IMR-90 (cell line): ENCODE measurements at regions of chr11 and their contacts with region 1.

Region 1: DNA sequence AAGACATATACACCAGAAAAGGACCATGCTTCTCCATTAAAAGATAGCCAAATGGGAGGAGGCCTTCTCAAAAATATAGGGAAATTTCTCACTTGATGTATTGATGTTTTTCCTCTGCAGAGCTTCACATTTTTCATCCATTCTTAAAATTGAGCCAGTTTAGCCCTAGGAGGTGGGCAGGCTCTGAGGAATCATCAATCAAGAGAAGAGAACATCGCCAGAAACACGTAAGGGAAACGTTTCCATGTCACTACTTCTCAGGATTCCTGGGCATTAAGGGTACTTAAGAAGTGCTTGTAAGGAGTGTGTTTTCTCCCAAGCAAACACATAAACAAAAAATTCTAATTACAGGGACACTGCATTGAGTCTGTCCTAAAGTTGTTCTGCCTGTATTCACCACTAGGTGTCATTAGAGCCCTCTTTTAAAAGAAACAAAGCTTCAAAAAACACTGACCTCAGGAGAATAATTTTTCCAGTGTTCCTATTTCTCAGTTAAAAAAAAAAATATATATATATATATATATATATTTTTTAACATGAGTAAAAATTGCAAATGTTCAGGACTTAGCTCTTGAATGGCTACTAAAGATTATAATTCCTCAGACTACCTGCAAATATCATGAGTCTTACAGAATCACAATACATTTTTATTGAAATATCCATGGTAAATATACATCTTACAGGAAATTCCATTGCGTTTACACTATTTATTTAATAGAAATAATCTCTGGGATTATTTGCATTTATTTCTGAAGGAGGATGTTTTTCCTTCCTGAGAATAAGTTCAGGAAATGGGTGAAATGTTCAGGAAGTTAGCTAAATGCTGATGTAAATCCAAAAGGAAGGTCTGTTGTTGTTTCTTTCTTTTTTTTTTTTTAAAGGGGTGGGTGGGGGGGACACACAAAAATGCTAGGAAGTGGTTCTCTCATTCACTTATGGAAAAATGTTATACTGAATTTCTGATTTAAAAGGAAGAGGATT is 16.0 kb downstream of the FZD4 start:
- DNase-seq: peak; percentile 68
- ATAC-seq: peak; percentile 43
- H3K4me3 ChIP-seq: no peak overlapping the region
- H3K27ac ChIP-seq: no peak overlapping the region
- H3K4me1 ChIP-seq: peaks cover 23% of the 10 kb centered on the region
- H3K27me3 ChIP-seq: no peaks in the 10 kb centered on the region
- CTCF ChIP-seq: peak; percentile 74
- POLR2A ChIP-seq: no peak
- RAD21 ChIP-seq: peak; percentile 73

Region 2: GRCh38 chr11:86949995-86950660 is 10.9 kb after region 1 on chr11:
- CTCF ChIA-PET with region 1: interaction called, 4 read pairs
- POLR2A ChIA-PET with region 1: interaction called, 14 read pairs
- dilution Hi-C with region 1: no loop called
- in situ Hi-C with region 1: no loop called
- intact Hi-C with region 1: no loop called
- DNase-seq: peak; percentile 77
- ATAC-seq: peak; percentile 6; the same call in 1 of the 2 replicates
- H3K4me3 ChIP-seq: no peak overlapping the region
- H3K27ac ChIP-seq: no peak overlapping the region
- H3K4me1 ChIP-seq: peaks cover 21% of the 10 kb centered on the region
- H3K27me3 ChIP-seq: no peaks in the 10 kb centered on the region
- CTCF ChIP-seq: no peak
- POLR2A ChIP-seq: no peak
- RAD21 ChIP-seq: no peak

Region 3: DNA sequence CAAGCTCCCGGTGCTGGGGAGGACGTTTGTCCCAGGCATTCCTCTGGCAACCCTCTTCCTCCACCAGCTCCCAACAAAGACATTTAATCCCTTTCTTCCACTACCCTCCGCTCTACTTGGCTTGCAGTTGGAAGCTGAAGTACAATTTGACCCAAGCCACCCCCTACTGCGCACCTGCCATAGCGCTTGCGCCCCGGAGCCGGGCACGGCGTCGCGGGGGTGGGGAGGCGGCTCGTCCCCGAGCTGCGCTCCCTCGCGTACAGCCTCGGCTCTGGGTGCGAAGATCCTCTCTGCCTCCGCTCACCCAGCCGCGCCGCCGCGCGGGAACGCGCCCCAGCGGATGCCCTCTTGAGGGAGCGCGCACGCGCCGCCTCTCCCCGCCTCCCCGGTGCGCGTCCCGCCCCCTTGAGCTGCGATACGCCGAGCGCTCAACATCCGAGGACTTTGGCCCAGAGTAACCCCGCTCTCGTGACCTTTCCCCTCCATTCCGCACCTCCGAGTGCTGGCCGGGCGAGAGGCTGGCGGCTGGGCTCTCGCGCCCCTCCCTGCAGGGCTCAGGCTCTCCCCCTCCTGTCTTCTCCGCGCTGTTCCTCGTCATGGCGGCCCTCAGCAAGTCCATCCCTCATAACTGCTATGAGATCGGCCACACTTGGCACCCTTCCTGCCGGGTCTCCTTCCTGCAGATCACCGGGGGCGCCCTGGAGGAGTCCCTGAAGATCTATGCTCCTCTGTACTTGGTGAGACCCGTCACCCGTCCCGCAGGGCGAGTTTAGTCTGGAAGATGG is 98.5 kb after region 1 on chr11 and contains the start of gene TMEM135:
- CTCF ChIA-PET with region 1: interaction called, 3 read pairs
- POLR2A ChIA-PET with region 1: no interaction called
- dilution Hi-C with region 1: no loop called
- in situ Hi-C with region 1: no loop called
- intact Hi-C with region 1: loop called (anchors 5 kb)
- DNase-seq: peak; percentile 83
- ATAC-seq: peak; percentile 98
- H3K4me3 ChIP-seq: peak within 1 kb of the TSS; percentile 81
- H3K27ac ChIP-seq: peak within 1 kb of the TSS; percentile 71
- H3K4me1 ChIP-seq: peaks cover 2% of the 10 kb centered on the region; the same call in 1 of the 2 replicates
- H3K27me3 ChIP-seq: no peaks in the 10 kb centered on the region
- CTCF ChIP-seq: no peak
- POLR2A ChIP-seq: no peak
- RAD21 ChIP-seq: no peak
- total RNA-seq, gene TMEM135: 5.9 and 6.9 TPM in 2 replicates

Region 4: DNA sequence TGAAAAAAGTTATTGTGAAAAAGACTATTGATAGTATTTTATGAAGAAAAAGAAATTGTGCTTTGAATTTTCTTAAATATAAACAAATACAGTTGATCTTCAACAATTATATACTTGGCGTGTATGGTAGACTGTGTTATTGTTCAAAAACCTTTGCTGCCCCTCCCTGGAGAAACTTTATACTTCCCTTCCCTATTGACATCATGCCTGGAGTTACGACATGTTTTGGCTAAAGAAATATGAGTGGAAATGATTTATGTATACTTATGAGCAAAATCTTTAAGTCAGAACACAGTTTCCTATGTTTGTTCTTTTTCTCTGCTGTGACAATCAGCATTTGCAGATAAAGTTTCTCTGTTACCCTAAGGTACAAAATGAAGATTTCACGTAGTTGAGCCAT is 342.3 kb after region 1 on chr11:
- CTCF ChIA-PET with region 1: interaction called, 4 read pairs
- POLR2A ChIA-PET with region 1: no interaction called
- dilution Hi-C with region 1: no loop called
- in situ Hi-C with region 1: loop called (anchors 5 kb)
- intact Hi-C with region 1: loop called (anchors 1 kb)
- DNase-seq: peak; percentile 77
- ATAC-seq: peak; percentile 83
- H3K4me3 ChIP-seq: no peak overlapping the region
- H3K27ac ChIP-seq: no peak overlapping the region
- H3K4me1 ChIP-seq: no peaks in the 10 kb centered on the region
- H3K27me3 ChIP-seq: no peaks in the 10 kb centered on the region
- CTCF ChIP-seq: peak; percentile 57
- POLR2A ChIP-seq: no peak
- RAD21 ChIP-seq: peak; percentile 62

Region 5: DNA sequence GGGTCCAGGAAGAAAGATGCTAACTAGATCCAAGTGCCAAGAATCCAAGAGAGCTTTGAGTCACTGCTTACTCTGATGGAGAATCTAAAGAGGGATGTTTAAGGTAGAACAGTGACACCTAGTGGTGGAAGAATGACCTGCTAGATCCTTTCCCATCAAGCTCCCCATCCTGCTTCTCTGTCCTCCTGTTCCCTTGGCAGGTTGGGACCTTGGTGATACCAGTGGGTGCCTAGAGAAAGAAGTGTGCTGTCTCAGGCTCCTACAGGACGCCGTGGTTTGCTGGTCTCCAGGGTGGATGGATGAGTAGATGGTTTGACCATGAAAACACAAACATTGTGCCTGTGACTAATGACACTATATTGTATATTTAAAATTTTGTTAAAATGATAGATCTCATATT is 482.2 kb after region 1 on chr11:
- CTCF ChIA-PET with region 1: interaction called, 6 read pairs
- POLR2A ChIA-PET with region 1: interaction called, 3 read pairs
- dilution Hi-C with region 1: no loop called
- in situ Hi-C with region 1: loop called (anchors 25 kb)
- intact Hi-C with region 1: loop called (anchors 1 kb)
- DNase-seq: peak; percentile 87
- ATAC-seq: peak; percentile 79
- H3K4me3 ChIP-seq: no peak overlapping the region
- H3K27ac ChIP-seq: no peak overlapping the region
- H3K4me1 ChIP-seq: peaks cover 13% of the 10 kb centered on the region
- H3K27me3 ChIP-seq: no peaks in the 10 kb centered on the region
- CTCF ChIP-seq: peak; percentile 67
- POLR2A ChIP-seq: no peak
- RAD21 ChIP-seq: peak; percentile 63